ENCODE measurements at regions of chr1 and their contacts with region 1.

Region 1: GRCh38 chr1:162639718-162640117 is 7.5 kb downstream of the DDR2 start:
- DNase-seq: no peak
- ATAC-seq: no peak
- H3K4me3 ChIP-seq: no peak overlapping the region
- H3K27ac ChIP-seq: no peak overlapping the region
- H3K4me1 ChIP-seq: peaks cover 0 to 20% (median 7%) of the 10 kb centered on the region in 9 donors
- H3K27me3 ChIP-seq: no peaks in the 10 kb centered on the region
- CTCF ChIP-seq: no peak

Region 2: GRCh38 chr1:162596514-162597170 is 43.1 kb before region 1 on chr1:
- intact Hi-C with region 1: no loop called
- DNase-seq: no peak
- ATAC-seq: no peak
- H3K4me3 ChIP-seq: no peak overlapping the region
- H3K27ac ChIP-seq: no peak overlapping the region
- H3K4me1 ChIP-seq: no peaks in the 10 kb centered on the region
- H3K27me3 ChIP-seq: no peaks in the 10 kb centered on the region
- CTCF ChIP-seq: no peak

Region 3: DNA sequence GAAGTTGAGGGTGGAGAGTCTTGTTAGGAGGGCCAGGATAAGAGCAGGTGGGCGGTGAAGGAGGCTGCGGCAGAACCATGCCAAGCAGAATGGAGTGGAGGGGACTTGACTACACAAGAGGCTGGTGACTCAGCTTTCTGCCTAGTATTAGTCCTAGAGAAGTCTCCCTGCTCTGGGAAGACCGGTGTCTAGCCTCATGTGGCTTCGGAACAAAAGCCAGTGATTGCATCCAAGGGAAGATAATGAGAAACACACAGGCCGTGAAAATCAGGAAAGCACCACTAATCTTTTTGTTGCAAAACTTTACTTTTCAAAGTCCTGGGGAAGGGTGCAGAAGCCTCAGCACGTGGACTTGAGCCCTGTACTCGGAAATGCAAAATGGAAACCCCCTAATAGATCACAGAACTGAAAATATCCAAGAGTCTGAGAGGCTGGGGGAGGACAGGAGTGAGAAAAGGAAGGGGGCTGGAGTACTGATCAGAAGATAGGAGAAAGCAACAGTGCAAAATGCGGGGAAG is 23.9 kb after region 1 on chr1:
- intact Hi-C with region 1: no loop called
- DNase-seq: no peak
- ATAC-seq: peak in 5 of 8 donors; percentile 49 to 92 (median 59)
- H3K4me3 ChIP-seq: no peak overlapping the region
- H3K27ac ChIP-seq: peak overlapping the region in 2 of 10 donors; percentile 11 to 26
- H3K4me1 ChIP-seq: peaks cover 0 to 20% (median 10%) of the 10 kb centered on the region in 9 donors
- H3K27me3 ChIP-seq: no peaks in the 10 kb centered on the region
- CTCF ChIP-seq: no peak

Region 4: GRCh38 chr1:162678439-162678838 is 38.7 kb after region 1 on chr1:
- intact Hi-C with region 1: loop called in 3 of 10 experiments (anchors 5 kb)
- DNase-seq: peak in 1 of 2 donors; percentile 33
- ATAC-seq: peak in 6 of 8 donors; percentile 38 to 81 (median 61)
- H3K4me3 ChIP-seq: no peak overlapping the region
- H3K27ac ChIP-seq: peak overlapping the region in 6 of 10 donors; percentile 16 to 59 (median 23)
- H3K4me1 ChIP-seq: peaks cover 6 to 57% (median 39%) of the 10 kb centered on the region in 9 donors
- H3K27me3 ChIP-seq: no peaks in the 10 kb centered on the region
- CTCF ChIP-seq: no peak

Region 5: DNA sequence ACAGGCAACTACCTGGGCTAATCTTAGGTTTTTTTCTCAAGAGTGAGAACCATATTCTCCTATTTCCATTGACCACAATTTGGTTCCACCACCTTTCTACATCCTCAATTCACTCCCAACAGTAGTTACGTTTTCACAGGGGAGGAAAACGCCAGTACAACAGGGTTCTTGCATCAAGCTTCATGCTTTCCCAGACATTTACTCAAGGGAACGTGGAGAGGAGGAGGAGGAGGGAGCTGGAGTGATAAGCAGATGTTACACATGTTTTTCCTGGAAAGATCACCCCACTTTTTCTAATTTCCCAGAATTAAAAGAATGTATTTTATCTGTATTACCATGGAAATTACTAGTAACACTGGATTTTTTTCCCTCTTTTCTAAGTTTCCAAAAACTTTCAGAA is 504.7 kb after region 1 on chr1:
- intact Hi-C with region 1: no loop called
- DNase-seq: peak in 1 of 2 donors; percentile 42
- ATAC-seq: peak in 7 of 8 donors; percentile 64 to 86 (median 80)
- H3K4me3 ChIP-seq: no peak overlapping the region
- H3K27ac ChIP-seq: peak overlapping the region in 4 of 10 donors; percentile 31 to 55 (median 40)
- H3K4me1 ChIP-seq: peaks cover 0 to 22% (median 7%) of the 10 kb centered on the region in 9 donors
- H3K27me3 ChIP-seq: no peaks in the 10 kb centered on the region
- CTCF ChIP-seq: no peak

Region 6: GRCh38 chr1:163583661-163584181 is 944.0 kb after region 1 on chr1:
- intact Hi-C with region 1: no loop called
- DNase-seq: no peak
- ATAC-seq: no peak
- H3K4me3 ChIP-seq: no peak overlapping the region
- H3K27ac ChIP-seq: no peak overlapping the region
- H3K4me1 ChIP-seq: peaks cover 0 to 4% (median 0%) of the 10 kb centered on the region in 9 donors
- H3K27me3 ChIP-seq: no peaks in the 10 kb centered on the region
- CTCF ChIP-seq: no peak